ENCODE measurements at regions of chr2 and their contacts with region 1.

Region 1: GRCh38 chr2:230712443-230713330 is at the start of gene CAB39:
- DNase-seq: peak; percentile 73 to 90
- H3K4me3 ChIP-seq: peak within 1 kb of the TSS; percentile 87
- H3K27ac ChIP-seq: peak within 1 kb of the TSS; percentile 84
- H3K4me1 ChIP-seq: peaks cover 42% of the 10 kb centered on the region
- H3K27me3 ChIP-seq: no peaks in the 10 kb centered on the region
- CTCF ChIP-seq: peak; percentile 64; the same call in 1 of the 2 replicates
- total RNA-seq, gene CAB39: 70.9 and 86.1 TPM in 2 replicates

Region 2: GRCh38 chr2:230269715-230270114 is 443.0 kb before region 1 on chr2:
- CTCF ChIA-PET with region 1: no interaction called
- POLR2A ChIA-PET with region 1: no interaction called
- intact Hi-C with region 1: no loop called
- DNase-seq: no peak
- H3K4me3 ChIP-seq: no peak overlapping the region
- H3K27ac ChIP-seq: no peak overlapping the region
- H3K4me1 ChIP-seq: no peaks in the 10 kb centered on the region
- H3K27me3 ChIP-seq: no peaks in the 10 kb centered on the region
- CTCF ChIP-seq: no peak

Region 3: GRCh38 chr2:230650585-230651137 is 62.0 kb before region 1 on chr2:
- CTCF ChIA-PET with region 1: no interaction called
- POLR2A ChIA-PET with region 1: interaction called, 5 read pairs
- intact Hi-C with region 1: loop called (anchors 5 kb)
- DNase-seq: peak; percentile 56 to 71
- H3K4me3 ChIP-seq: no peak overlapping the region
- H3K27ac ChIP-seq: no peak overlapping the region
- H3K4me1 ChIP-seq: peaks cover 15% of the 10 kb centered on the region
- H3K27me3 ChIP-seq: no peaks in the 10 kb centered on the region
- CTCF ChIP-seq: no peak

Region 4: GRCh38 chr2:231099918-231100317 is 387.2 kb after region 1 on chr2:
- CTCF ChIA-PET with region 1: no interaction called
- POLR2A ChIA-PET with region 1: no interaction called
- intact Hi-C with region 1: no loop called
- DNase-seq: no peak
- H3K4me3 ChIP-seq: no peak overlapping the region
- H3K27ac ChIP-seq: no peak overlapping the region
- H3K4me1 ChIP-seq: no peaks in the 10 kb centered on the region
- H3K27me3 ChIP-seq: no peaks in the 10 kb centered on the region
- CTCF ChIP-seq: no peak